ENCODE measurements at regions of chr2 and their contacts with region 1.

Region 1: GRCh38 chr2:64865073-64865830 is 123.9 kb upstream of the SLC1A4 start:
- DNase-seq: peak; percentile 60 to 90 (median 86)
- ATAC-seq: peak; percentile 92
- H3K4me3 ChIP-seq: peak overlapping the region; percentile 14; the same call in 1 of the 2 replicates
- H3K27ac ChIP-seq: no peak overlapping the region
- H3K4me1 ChIP-seq: peaks cover 18 to 24% of the 10 kb centered on the region in 2 experiments
- H3K27me3 ChIP-seq: no peaks in the 10 kb centered on the region
- CTCF ChIP-seq: peak; percentile 56 to 66 (median 66); a peak in 5 of 6 replicates
- EP300 ChIP-seq: no peak
- POLR2A ChIP-seq: no peak
- RAD21 ChIP-seq: peak; percentile 78 to 97

Region 2: GRCh38 chr2:64807417-64807816 is 57.8 kb before region 1 on chr2:
- CTCF ChIA-PET with region 1: no interaction called
- POLR2A ChIA-PET with region 1: no interaction called
- in situ Hi-C with region 1: no loop called
- intact Hi-C with region 1: no loop called
- DNase-seq: peak in 3 of 4 experiments; percentile 19 to 64 (median 19)
- ATAC-seq: peak; percentile 62
- H3K4me3 ChIP-seq: no peak overlapping the region
- H3K27ac ChIP-seq: no peak overlapping the region
- H3K4me1 ChIP-seq: peaks cover 0 to 5% of the 10 kb centered on the region in 2 experiments; a peak in 2 of 5 replicates
- H3K27me3 ChIP-seq: no peaks in the 10 kb centered on the region
- CTCF ChIP-seq: peak in 1 of 3 experiments; percentile 14; a peak in 1 of 6 replicates
- EP300 ChIP-seq: 0 out of 2 replicates have a peak, but pooled peaks have one; percentile 12
- POLR2A ChIP-seq: no peak
- RAD21 ChIP-seq: 0 out of 4 replicates have a peak, but pooled peaks have one; percentile 9 to 21

Region 3: DNA sequence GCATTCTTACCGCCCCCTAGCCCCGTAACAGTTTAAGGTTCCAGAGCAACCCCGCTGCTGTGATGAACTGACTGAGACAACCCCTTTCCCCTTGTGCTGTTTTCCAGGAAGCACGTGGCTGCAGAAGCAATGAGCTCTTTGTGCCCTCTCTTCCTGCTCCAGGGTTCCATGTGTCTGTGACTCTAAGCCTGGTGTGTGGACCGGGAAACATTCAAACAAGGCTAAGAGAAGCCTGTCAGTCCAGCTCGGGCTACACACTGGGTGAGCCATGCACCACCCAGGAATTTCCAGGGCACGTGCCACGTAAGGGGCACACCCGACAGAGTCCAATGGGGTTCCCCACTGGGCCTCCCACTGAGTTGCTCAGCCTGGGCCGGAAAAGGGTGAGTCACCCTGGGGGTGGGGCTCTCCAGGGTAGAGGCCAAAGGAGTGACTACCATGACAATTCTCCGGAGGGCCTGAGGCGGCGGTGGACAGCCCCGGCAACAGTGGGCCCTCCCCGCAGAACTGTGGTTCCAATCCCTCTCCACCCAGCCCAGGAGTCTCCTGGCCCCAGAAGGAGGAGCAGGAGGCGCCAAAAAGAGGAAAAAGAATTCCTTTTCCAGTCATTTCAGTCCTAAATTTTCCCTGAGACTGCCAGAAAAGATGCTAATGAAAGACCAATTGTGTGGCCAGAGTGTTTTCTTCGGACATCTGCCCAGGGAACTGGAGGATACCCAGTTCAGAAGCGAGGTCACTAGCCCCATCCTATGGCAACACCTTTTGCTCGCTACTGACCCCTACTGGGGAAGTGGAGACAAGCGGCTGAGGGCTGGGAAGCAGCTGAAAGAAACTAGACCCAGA is 33.9 kb before region 1 on chr2:
- CTCF ChIA-PET with region 1: interaction called, 3 read pairs
- POLR2A ChIA-PET with region 1: no interaction called
- in situ Hi-C with region 1: no loop called
- intact Hi-C with region 1: loop called (anchors 2 kb)
- DNase-seq: peak; percentile 90 to 94 (median 92)
- ATAC-seq: peak; percentile 99
- H3K4me3 ChIP-seq: no peak overlapping the region
- H3K27ac ChIP-seq: peak overlapping the region; percentile 94
- H3K4me1 ChIP-seq: peaks cover 10 to 27% of the 10 kb centered on the region in 2 experiments
- H3K27me3 ChIP-seq: no peaks in the 10 kb centered on the region
- CTCF ChIP-seq: peak; percentile 91 to 98 (median 91)
- EP300 ChIP-seq: peak; percentile 29; the same call in 1 of the 2 replicates
- POLR2A ChIP-seq: 0 out of 2 replicates have a peak, but pooled peaks have one; percentile 52
- RAD21 ChIP-seq: peak; percentile 79 to 80